Sigmoid colon (tissue), 7 donors: ENCODE measurements at regions of chr10 and their contacts with region 1.

Region 1: DNA sequence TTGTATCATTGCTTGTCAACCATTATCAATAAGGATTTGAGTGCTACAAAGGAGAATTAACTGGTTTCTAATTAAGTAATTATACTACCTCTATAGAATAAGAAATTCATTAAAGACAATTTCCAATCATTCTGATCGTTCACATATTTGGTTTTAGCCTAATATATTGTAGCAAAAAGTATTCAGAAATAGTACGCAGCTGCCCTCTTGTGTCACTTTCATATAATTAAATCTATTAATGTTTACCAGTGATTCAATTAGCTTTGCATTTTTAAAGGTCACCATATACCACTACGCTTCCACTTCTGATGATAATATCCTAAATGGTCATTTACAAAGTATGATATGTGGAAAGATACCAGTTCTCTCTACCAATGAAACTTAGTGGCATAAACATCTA is 128.3 kb downstream of the NEBL start:
- DNase-seq: no peak
- H3K4me3 ChIP-seq: no peak overlapping the region
- H3K27ac ChIP-seq: no peak overlapping the region
- H3K4me1 ChIP-seq: peaks cover 0 to 5% (median 0%) of the 10 kb centered on the region in 4 donors
- H3K27me3 ChIP-seq: no peaks in the 10 kb centered on the region
- CTCF ChIP-seq: peak in 3 of 4 experiments; percentile 10 to 44 (median 16)
- EP300 ChIP-seq: no peak
- POLR2A ChIP-seq: no peak

Region 2: DNA sequence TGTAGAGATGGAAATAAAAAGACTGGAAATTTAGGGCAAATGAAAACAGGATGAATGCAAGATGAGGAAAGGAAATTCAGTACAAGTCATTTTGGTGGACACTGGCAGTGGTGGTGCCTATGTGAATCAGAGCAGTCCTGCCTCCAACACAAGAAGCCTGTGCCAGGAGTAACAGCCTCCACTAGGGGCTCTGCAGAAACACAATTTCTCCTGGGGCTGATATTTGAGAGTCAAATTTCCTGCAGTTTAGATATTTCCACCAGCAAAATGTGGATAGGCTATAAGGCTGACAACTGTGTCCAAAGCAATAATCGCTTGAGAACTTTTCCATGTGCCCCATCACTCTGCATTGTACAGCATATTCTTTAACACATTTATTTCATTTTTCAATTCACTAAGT is 957.3 kb before region 1 on chr10:
- intact Hi-C with region 1: loop called (anchors 5 kb)
- DNase-seq: peak; percentile 69
- H3K4me3 ChIP-seq: no peak overlapping the region
- H3K27ac ChIP-seq: no peak overlapping the region
- H3K4me1 ChIP-seq: peaks cover 0 to 11% (median 10%) of the 10 kb centered on the region in 4 donors
- H3K27me3 ChIP-seq: peaks cover 0 to 17% (median 0%) of the 10 kb centered on the region in 3 donors
- CTCF ChIP-seq: peak; percentile 13 to 28 (median 19)
- EP300 ChIP-seq: no peak
- POLR2A ChIP-seq: no peak

Region 3: GRCh38 chr10:20429742-20430141 is 339.1 kb before region 1 on chr10:
- intact Hi-C with region 1: no loop called
- DNase-seq: no peak
- H3K4me3 ChIP-seq: no peak overlapping the region
- H3K27ac ChIP-seq: no peak overlapping the region
- H3K4me1 ChIP-seq: no peaks in the 10 kb centered on the region
- H3K27me3 ChIP-seq: no peaks in the 10 kb centered on the region
- CTCF ChIP-seq: no peak
- EP300 ChIP-seq: no peak
- POLR2A ChIP-seq: no peak